Naive thymus-derived CD8-positive, alpha-beta T cell (primary cell): ENCODE measurements at regions of chr1 and their contacts with region 1.

Region 1: DNA sequence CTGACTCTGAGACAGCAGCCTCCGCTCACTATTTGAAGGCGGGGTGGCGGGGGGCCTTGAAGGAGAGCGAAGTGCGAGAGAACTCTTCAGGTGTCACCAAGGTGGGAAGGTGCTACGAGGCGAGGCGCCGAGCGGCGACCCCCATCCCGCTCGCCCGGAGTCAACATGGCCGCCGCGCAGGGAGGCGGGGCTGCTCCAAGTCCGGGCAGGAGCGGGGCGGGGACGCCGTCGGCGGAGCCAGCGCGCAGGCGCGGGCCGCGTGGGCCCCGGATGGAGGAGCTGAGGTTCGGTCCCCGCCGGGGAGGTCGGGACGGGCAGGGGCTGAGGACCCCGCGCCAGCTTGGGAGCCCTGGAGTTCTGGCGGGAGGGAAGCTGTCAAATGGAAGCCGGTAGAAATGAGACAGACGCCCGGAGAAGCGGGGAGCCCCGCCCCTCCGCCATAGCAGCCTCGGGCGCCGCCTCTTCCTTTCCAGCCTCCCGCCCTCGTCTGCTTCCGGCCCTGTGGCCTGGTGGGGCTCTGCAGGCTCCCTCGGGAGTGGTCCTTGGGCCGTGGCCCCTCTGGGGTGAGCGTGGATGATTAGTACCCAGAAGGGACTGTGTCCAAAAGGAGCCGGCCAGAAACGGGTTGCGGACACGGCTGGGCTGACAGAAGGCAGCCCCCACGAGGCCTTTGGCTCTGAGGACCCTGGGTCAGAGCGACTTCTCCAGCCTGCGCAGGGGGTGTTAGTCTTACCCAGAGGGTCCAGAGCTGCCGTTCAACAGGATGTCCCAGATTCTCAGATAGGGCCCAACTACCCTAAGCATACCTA is at the start of gene PIGV:
- DNase-seq: peak; percentile 74 to 96 (median 90)
- ATAC-seq: peak; percentile 72 to 77
- H3K4me3 Mint-ChIP-seq: peak within 1 kb of the TSS; percentile 83 to 100 (median 98)
- H3K27ac Mint-ChIP-seq: peak within 1 kb of the TSS; percentile 99 to 100 (median 100)
- H3K4me1 Mint-ChIP-seq: peaks cover 44 to 80% (median 69%) of the 10 kb centered on the region in 4 donors
- H3K27me3 Mint-ChIP-seq: no peaks in the 10 kb centered on the region
- polyA plus RNA-seq, gene PIGV: 8.2 to 14.4 (median 9.6) TPM

Region 2: DNA sequence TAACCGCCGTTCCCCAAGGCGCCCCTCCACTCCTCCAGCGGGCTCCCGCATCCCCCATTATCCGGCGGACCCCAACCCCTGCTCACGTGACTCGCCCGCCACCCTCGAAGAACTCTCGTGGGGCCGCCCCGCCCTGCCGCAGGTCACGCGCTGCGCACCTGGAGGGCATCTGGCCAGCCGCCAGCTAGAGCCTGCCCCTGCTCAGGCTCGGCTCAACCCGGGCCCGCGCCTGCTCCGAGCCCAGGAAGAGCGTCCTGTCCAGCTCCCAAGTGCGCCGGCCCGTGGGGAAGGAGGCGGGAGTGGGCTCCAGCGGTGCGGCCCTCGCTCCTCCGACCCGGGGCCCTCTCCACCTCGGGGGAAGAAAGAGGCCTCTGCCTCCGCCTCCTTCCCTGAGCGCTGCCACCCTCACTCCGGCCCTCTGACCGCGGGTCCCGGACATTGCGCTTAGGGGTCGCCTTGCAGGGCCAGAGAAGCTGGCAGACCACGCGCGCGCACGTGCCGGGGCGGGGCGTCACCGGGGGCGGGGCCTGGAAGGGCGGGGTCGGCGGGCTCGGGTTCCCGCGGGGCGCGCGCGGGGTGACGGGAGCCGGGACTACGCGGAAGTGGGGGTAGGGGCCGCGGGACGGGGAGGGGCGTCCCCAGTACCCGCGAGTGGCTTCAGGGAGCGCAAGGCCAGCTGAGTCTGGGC is 287.3 kb before region 1 on chr1:
- POLR2A ChIA-PET with region 1: interaction called, 24 read pairs
- DNase-seq: peak; percentile 76 to 92 (median 88)
- ATAC-seq: peak; percentile 73
- H3K4me3 Mint-ChIP-seq: peak overlapping the region; percentile 82 to 90 (median 86)
- H3K27ac Mint-ChIP-seq: peak overlapping the region in 9 of 10 donors; percentile 81 to 97 (median 93)
- H3K4me1 Mint-ChIP-seq: peaks cover 6 to 23% (median 17%) of the 10 kb centered on the region in 4 donors
- H3K27me3 Mint-ChIP-seq: no peaks in the 10 kb centered on the region

Region 3: DNA sequence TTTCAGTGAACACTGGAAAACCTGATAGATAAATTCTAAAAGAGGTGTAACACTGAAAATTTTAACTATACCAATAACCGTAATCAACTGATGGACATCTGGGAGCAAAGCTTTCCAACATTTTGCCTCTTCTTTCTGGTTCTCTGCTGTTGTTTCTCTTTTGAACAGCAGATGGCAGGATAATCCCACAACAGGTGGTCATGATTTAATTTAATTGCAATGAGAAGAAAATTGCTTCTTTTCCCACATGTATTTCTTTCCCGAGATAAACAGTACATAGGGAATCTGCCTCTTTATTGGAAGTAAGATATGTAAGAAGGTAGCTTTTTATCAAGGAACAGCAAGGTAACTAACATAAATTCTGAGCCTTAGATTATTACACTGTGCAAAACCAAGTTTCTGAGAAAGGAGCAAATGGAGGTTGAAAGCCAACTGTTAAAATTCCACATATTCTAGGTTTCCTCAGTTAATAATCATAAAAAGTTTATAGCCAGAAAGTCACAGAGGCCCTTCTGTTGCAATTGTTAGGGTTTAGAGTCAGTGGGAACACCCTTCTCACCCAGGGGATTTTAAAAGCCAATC is 185.4 kb before region 1 on chr1:
- POLR2A ChIA-PET with region 1: interaction called, 29 read pairs
- DNase-seq: peak in 9 of 10 donors; percentile 18 to 76 (median 62)
- ATAC-seq: peak in 1 of 2 donors; percentile 37
- H3K4me3 Mint-ChIP-seq: no peak overlapping the region
- H3K27ac Mint-ChIP-seq: no peak overlapping the region
- H3K4me1 Mint-ChIP-seq: peaks cover 6 to 15% (median 8%) of the 10 kb centered on the region in 4 donors
- H3K27me3 Mint-ChIP-seq: peaks cover 0 to 2% (median 0%) of the 10 kb centered on the region in 5 donors

Region 4: GRCh38 chr1:26695356-26696118 is 92.4 kb before region 1 on chr1 and contains the start of gene ARID1A:
- POLR2A ChIA-PET with region 1: interaction called, 432 read pairs
- DNase-seq: peak; percentile 90 to 99 (median 96)
- ATAC-seq: peak; percentile 53 to 60
- H3K4me3 Mint-ChIP-seq: peak within 1 kb of the TSS in 9 of 10 donors; percentile 86 to 98 (median 94)
- H3K27ac Mint-ChIP-seq: peak within 1 kb of the TSS; percentile 76 to 98 (median 96)
- H3K4me1 Mint-ChIP-seq: peaks cover 14 to 35% (median 29%) of the 10 kb centered on the region in 4 donors
- H3K27me3 Mint-ChIP-seq: no peaks in the 10 kb centered on the region
- polyA plus RNA-seq, gene ARID1A: 21.2 to 32.0 (median 28.9) TPM

Region 5: GRCh38 chr1:26744075-26744959 is 43.6 kb before region 1 on chr1:
- POLR2A ChIA-PET with region 1: interaction called, 32 read pairs
- DNase-seq: peak; percentile 39 to 87 (median 74)
- ATAC-seq: peak; percentile 90 to 94
- H3K4me3 Mint-ChIP-seq: peak overlapping the region; percentile 60 to 86 (median 78)
- H3K27ac Mint-ChIP-seq: peak overlapping the region; percentile 87 to 96 (median 93)
- H3K4me1 Mint-ChIP-seq: peaks cover 43 to 93% (median 83%) of the 10 kb centered on the region in 4 donors
- H3K27me3 Mint-ChIP-seq: no peaks in the 10 kb centered on the region

Region 6: GRCh38 chr1:26799479-26800142 is 11.7 kb after region 1 on chr1:
- POLR2A ChIA-PET with region 1: interaction called, 41 read pairs
- DNase-seq: no peak
- ATAC-seq: peak; percentile 47 to 61
- H3K4me3 Mint-ChIP-seq: peak overlapping the region; percentile 47 to 86 (median 72)
- H3K27ac Mint-ChIP-seq: peak overlapping the region; percentile 90 to 99 (median 96)
- H3K4me1 Mint-ChIP-seq: peaks cover 25 to 40% (median 38%) of the 10 kb centered on the region in 4 donors
- H3K27me3 Mint-ChIP-seq: no peaks in the 10 kb centered on the region

Region 7: GRCh38 chr1:26839339-26839722 is 51.4 kb after region 1 on chr1:
- POLR2A ChIA-PET with region 1: no interaction called
- DNase-seq: no peak
- ATAC-seq: no peak
- H3K4me3 Mint-ChIP-seq: no peak overlapping the region
- H3K27ac Mint-ChIP-seq: peak overlapping the region in 7 of 10 donors; percentile 6 to 79 (median 55)
- H3K4me1 Mint-ChIP-seq: peaks cover 2 to 26% (median 16%) of the 10 kb centered on the region in 4 donors
- H3K27me3 Mint-ChIP-seq: no peaks in the 10 kb centered on the region

Region 8: GRCh38 chr1:26853156-26853555 is 65.2 kb after region 1 on chr1:
- POLR2A ChIA-PET with region 1: no interaction called
- DNase-seq: peak; percentile 62 to 91 (median 76)
- ATAC-seq: peak; percentile 94 to 97
- H3K4me3 Mint-ChIP-seq: peak overlapping the region in 1 of 10 donors; percentile 5
- H3K27ac Mint-ChIP-seq: peak overlapping the region in 2 of 10 donors; percentile 12 to 20
- H3K4me1 Mint-ChIP-seq: peaks cover 0 to 2% (median 0%) of the 10 kb centered on the region in 4 donors
- H3K27me3 Mint-ChIP-seq: no peaks in the 10 kb centered on the region

Region 9: GRCh38 chr1:26986658-26987057 is 198.7 kb after region 1 on chr1:
- POLR2A ChIA-PET with region 1: no interaction called
- DNase-seq: no peak
- ATAC-seq: no peak
- H3K4me3 Mint-ChIP-seq: no peak overlapping the region
- H3K27ac Mint-ChIP-seq: peak overlapping the region in 1 of 10 donors; percentile 1
- H3K4me1 Mint-ChIP-seq: peaks cover 0 to 8% (median 0%) of the 10 kb centered on the region in 4 donors
- H3K27me3 Mint-ChIP-seq: peaks cover 14 to 43% (median 27%) of the 10 kb centered on the region in 5 donors